ENCODE measurements at regions of chr1 and their contacts with region 1.

Region 1: GRCh38 chr1:156813750-156814570 is 2.7 kb downstream of the SH2D2A start:
- DNase-seq: peak; percentile 86
- ATAC-seq: peak; percentile 38
- H3K4me3 Mint-ChIP-seq: peak overlapping the region; percentile 93
- H3K27ac Mint-ChIP-seq: peak overlapping the region; percentile 100
- H3K4me1 Mint-ChIP-seq: peaks cover 61% of the 10 kb centered on the region
- H3K27me3 Mint-ChIP-seq: no peaks in the 10 kb centered on the region

Region 2: GRCh38 chr1:156740679-156741612 is 73.0 kb before region 1 on chr1 and contains the start of gene MRPL24:
- CTCF ChIA-PET with region 1: no interaction called
- POLR2A ChIA-PET with region 1: no interaction called
- intact Hi-C with region 1: loop called in 1 of 2 experiments (anchors 1 kb)
- DNase-seq: peak; percentile 98
- ATAC-seq: peak; percentile 86
- H3K4me3 Mint-ChIP-seq: peak within 1 kb of the TSS; percentile 98
- H3K27ac Mint-ChIP-seq: peak within 1 kb of the TSS; percentile 94
- H3K4me1 Mint-ChIP-seq: peaks cover 49% of the 10 kb centered on the region
- H3K27me3 Mint-ChIP-seq: no peaks in the 10 kb centered on the region
- total RNA-seq, gene MRPL24: 81.9 to 89.7 TPM

Region 3: DNA sequence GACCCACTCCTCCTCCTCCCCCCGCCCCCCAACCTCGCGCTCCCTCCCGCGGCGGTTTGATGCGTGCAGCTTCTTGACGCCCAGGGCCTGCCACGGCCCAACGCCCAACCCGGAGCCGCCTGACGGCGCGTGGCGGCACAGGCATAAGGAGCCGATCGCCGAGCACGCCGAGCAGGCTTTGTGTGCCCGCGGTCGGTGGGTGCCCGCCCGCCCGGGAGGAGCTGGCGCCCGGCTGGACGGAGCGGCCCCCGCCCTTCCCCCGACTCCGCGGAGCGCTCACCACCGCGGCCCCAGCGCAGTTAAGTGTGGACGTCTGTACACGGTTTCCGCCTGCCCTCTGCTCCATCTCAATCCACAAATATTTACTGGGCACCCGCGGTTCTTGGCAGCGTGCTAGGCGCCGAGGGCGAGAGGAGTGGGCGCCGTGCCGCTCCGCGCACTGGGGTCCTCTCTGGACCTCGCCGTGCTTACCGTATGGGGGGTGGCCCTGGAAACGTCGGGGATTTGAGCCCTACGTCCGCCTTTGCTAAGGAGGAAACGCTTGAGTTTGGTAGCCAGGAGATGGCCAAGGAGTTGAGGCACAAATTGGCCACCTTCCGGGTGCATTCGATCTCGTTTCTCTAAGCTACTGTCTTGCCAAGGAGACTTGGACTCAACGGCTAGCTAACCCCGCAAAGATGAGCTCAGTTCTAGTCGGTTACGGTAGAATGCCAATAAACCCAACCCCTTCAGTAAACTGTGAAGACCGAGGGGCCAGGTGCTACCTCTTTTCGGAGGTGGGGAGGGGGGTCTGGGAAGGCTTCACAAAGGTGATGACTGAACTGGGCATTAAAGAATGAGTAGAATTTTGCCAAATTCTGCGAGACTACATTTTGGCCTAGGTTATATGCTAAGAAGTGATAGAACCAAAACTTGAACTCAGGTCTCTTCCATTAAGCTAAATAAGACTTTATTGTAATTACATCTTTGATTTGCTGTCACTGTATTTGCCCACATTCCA is 61.9 kb before region 1 on chr1:
- CTCF ChIA-PET with region 1: no interaction called
- POLR2A ChIA-PET with region 1: no interaction called
- intact Hi-C with region 1: loop called in 1 of 2 experiments (anchors 1 kb)
- DNase-seq: peak; percentile 99
- ATAC-seq: peak; percentile 81
- H3K4me3 Mint-ChIP-seq: peak overlapping the region; percentile 98
- H3K27ac Mint-ChIP-seq: peak overlapping the region; percentile 93
- H3K4me1 Mint-ChIP-seq: peaks cover 33% of the 10 kb centered on the region
- H3K27me3 Mint-ChIP-seq: no peaks in the 10 kb centered on the region

Region 4: GRCh38 chr1:156767101-156767878 is 46.7 kb before region 1 on chr1 and contains the start of gene PRCC:
- CTCF ChIA-PET with region 1: interaction called, 3 read pairs
- POLR2A ChIA-PET with region 1: interaction called, 5 read pairs
- intact Hi-C with region 1: loop called (anchors 1 to 2 kb)
- DNase-seq: peak; percentile 98
- ATAC-seq: peak; percentile 96
- H3K4me3 Mint-ChIP-seq: no peak within 1 kb of the TSS
- H3K27ac Mint-ChIP-seq: no peak within 1 kb of the TSS
- H3K4me1 Mint-ChIP-seq: peaks cover 35% of the 10 kb centered on the region
- H3K27me3 Mint-ChIP-seq: no peaks in the 10 kb centered on the region
- total RNA-seq, gene PRCC: 80.4 to 110 TPM

Region 5: DNA sequence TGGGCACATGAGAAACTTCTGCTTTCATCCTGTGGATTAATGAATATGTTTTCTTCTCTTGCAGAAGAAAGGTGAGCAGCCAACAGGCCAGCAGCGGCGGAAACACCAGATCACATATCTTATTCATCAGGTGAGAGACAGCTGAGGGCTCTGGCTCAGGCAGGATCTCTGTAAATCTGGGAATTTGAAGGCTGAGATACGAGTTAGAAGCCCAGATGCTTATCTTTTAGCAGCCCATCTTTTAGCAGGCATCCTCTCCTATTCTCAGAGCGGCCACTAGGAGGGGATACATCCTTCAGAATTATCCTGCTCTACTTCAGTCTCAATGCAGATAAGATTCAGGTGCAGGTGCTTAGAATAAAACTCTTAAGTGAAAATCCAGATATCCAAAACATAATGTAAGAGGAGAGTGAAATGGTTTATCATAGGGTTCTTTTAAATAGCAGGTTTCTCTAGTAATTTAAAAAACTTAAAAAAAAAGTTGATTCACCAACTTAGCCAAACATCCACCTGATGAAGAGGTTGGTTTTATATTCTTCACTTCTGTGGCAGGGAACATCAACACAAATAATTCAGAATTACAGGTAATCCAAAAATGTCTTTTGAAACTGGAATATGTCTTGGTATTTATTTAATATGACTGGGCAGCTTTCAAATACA is 16.6 kb before region 1 on chr1:
- CTCF ChIA-PET with region 1: interaction called, 14 read pairs
- POLR2A ChIA-PET with region 1: interaction called, 3 read pairs
- intact Hi-C with region 1: loop called in 1 of 2 experiments (anchors 2 kb)
- DNase-seq: peak; percentile 75
- ATAC-seq: peak; percentile 84
- H3K4me3 Mint-ChIP-seq: no peak overlapping the region
- H3K27ac Mint-ChIP-seq: no peak overlapping the region
- H3K4me1 Mint-ChIP-seq: peaks cover 7% of the 10 kb centered on the region
- H3K27me3 Mint-ChIP-seq: no peaks in the 10 kb centered on the region

Region 6: DNA sequence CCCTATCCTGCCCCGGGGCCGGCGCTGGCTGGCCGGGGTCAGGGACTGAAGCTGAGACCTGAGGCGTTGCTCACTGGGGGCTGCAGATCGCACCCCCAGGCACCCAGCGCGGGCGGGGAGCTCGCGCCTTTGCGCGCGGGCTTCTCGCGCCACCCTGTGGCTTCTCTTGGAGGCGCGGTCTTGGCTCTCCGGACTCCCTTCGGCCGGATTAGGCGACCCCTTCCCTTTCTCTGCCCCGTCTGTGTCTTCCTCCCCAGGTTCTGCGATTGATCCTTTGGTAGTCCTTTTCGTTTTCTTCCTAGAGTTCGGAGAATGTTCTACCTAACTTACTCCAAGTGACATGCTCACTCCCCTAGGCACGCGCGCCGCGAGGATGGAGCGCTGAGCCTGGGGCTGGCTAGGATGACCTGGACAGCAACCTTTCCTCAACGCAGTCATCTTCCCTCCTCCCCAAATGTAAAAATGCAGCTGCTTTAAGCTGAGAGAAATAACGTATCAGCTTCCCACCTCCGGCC is 46.2 kb after region 1 on chr1:
- CTCF ChIA-PET with region 1: interaction called, 10 read pairs
- POLR2A ChIA-PET with region 1: interaction called, 3 read pairs
- intact Hi-C with region 1: loop called (anchors 1 to 5 kb)
- DNase-seq: peak; percentile 77
- ATAC-seq: peak; percentile 47
- H3K4me3 Mint-ChIP-seq: peak overlapping the region; percentile 56
- H3K27ac Mint-ChIP-seq: no peak overlapping the region
- H3K4me1 Mint-ChIP-seq: peaks cover 25% of the 10 kb centered on the region
- H3K27me3 Mint-ChIP-seq: peaks cover 45% of the 10 kb centered on the region